ENCODE measurements at regions of chr22 and their contacts with region 1.

Region 1: DNA sequence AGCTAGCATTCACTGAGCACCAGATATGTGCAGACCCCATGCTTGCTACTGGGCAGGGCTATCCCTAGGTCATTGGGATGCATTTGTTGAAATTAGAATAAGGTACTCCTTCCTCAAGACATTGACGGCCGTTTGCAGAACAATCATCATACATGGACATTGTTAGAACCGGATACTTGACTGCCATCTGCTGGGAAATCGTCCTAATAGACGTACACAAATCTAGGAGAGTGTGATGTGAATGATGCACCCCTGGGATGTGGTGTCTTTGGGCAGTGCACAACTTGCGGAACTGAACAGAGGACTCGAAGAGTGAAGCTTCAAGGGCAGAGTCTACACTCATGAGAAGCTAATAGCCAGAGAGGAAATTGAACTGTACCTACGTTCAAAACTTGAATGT is 35.9 kb downstream of the MYO18B start:
- DNase-seq: peak; percentile 78
- H3K4me3 Mint-ChIP-seq: no peak overlapping the region
- H3K27ac Mint-ChIP-seq: no peak overlapping the region
- H3K4me1 Mint-ChIP-seq: peaks cover 7% of the 10 kb centered on the region
- H3K27me3 Mint-ChIP-seq: no peaks in the 10 kb centered on the region

Region 2: DNA sequence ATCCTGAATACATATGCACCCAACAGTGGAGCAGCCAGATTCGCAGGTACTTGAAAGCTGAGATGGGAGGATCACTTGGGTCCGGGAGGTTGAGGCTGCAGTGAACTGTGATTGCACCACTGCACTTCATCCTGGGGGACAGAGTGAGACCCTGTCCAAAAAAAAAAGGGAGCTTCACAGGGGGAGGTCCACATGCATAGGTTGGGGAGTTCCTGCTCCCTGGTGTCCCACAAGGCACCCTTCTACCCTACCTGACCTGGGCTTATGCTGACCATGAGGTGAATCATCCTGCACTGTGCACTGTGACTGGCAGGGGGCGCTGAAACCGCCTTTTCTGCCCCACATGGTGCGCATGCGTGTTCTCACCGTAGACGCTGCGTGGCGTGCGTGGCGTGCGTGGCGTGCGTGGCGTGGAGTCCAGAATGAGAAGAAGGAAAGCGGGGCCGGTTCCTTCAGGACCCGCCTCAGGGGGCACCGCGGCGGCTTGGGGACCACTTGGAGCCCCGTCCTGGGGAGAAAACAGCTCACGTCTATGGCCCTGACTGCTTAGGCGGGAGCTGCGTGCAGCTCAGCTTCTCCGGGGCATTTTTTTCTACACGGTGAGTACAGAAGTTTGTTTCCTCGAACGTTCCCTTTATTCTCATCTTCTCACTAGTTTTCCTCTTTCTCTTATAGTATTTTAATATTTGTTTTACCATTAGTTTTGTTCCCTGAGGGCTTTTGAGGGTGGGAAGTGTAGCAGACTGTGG is 330.0 kb before region 1 on chr22:
- intact Hi-C with region 1: loop called (anchors 5 kb)
- DNase-seq: peak; percentile 97
- H3K4me3 Mint-ChIP-seq: peak overlapping the region; percentile 90
- H3K27ac Mint-ChIP-seq: peak overlapping the region; percentile 95
- H3K4me1 Mint-ChIP-seq: peaks cover 39% of the 10 kb centered on the region
- H3K27me3 Mint-ChIP-seq: no peaks in the 10 kb centered on the region

Region 3: DNA sequence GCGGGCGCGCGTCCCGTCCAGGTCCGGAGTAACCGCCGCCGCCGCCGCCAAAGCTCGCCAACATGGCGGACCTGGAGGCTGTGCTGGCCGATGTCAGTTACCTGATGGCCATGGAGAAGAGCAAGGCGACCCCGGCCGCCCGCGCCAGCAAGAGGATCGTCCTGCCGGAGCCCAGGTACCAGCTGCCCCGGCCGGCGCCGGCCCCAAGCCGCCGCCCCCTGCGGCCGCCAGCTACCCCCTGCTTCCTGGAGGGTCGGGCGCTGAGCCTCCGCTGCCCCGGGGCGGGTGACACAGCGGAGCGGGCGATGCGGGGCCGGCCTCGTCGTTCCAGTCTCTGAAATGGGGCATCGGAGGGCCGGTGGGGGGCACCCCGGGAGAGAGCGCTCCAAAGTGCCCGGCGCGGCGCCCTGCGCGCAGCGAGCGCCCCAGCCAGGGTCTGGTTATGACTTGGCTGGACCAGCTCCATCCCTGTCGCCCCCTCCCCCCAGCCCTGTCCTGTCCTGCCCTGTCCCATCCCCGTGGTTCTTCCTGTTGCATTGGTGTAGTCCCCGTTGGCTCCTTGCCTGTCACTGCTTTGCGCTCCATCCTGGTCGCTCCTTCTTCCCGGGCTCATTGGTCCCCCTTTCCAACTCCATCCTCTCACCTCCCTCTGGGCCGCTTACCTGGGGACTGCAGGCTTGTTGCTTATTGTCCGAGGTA is 212.7 kb before region 1 on chr22:
- intact Hi-C with region 1: loop called (anchors 5 kb)
- DNase-seq: peak; percentile 79
- H3K4me3 Mint-ChIP-seq: peak overlapping the region; percentile 96
- H3K27ac Mint-ChIP-seq: peak overlapping the region; percentile 95
- H3K4me1 Mint-ChIP-seq: peaks cover 64% of the 10 kb centered on the region
- H3K27me3 Mint-ChIP-seq: no peaks in the 10 kb centered on the region

Region 4: DNA sequence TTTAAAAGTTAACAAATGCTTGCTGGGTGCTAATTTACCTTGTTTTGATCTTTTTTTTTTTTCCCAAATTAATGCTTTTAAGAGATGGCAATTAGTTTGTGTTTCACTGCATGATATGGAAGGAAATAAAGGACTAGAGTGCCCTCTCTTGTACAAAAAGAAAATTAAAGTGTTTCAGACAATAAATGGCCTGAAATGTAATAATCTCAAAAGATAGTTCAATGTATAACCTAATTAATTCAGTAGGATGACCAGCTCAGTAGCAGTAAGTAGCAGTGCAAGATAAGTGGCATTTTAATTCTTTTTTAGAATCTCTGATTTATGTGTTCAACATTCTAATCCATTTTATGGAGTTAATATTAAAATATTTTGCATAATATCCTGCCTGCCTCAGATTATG is 75.8 kb before region 1 on chr22:
- intact Hi-C with region 1: loop called (anchors 1 kb)
- DNase-seq: no peak
- H3K4me3 Mint-ChIP-seq: peak overlapping the region; percentile 69
- H3K27ac Mint-ChIP-seq: peak overlapping the region; percentile 61
- H3K4me1 Mint-ChIP-seq: peaks cover 47% of the 10 kb centered on the region
- H3K27me3 Mint-ChIP-seq: no peaks in the 10 kb centered on the region

Region 5: GRCh38 chr22:25718135-25718840 is 59.6 kb before region 1 on chr22:
- intact Hi-C with region 1: loop called (anchors 5 kb)
- DNase-seq: no peak
- H3K4me3 Mint-ChIP-seq: no peak overlapping the region
- H3K27ac Mint-ChIP-seq: peak overlapping the region; percentile 32
- H3K4me1 Mint-ChIP-seq: peaks cover 9% of the 10 kb centered on the region
- H3K27me3 Mint-ChIP-seq: no peaks in the 10 kb centered on the region

Region 6: GRCh38 chr22:25736378-25737011 is 41.4 kb before region 1 on chr22:
- intact Hi-C with region 1: loop called (anchors 5 kb)
- DNase-seq: peak; percentile 92
- H3K4me3 Mint-ChIP-seq: peak overlapping the region; percentile 71
- H3K27ac Mint-ChIP-seq: peak overlapping the region; percentile 98
- H3K4me1 Mint-ChIP-seq: peaks cover 48% of the 10 kb centered on the region
- H3K27me3 Mint-ChIP-seq: no peaks in the 10 kb centered on the region

Region 7: GRCh38 chr22:26330966-26331625 is 553.2 kb after region 1 on chr22:
- intact Hi-C with region 1: loop called (anchors 5 kb)
- DNase-seq: peak; percentile 88
- H3K4me3 Mint-ChIP-seq: no peak overlapping the region
- H3K27ac Mint-ChIP-seq: no peak overlapping the region
- H3K4me1 Mint-ChIP-seq: no peaks in the 10 kb centered on the region
- H3K27me3 Mint-ChIP-seq: peaks cover 10% of the 10 kb centered on the region

Measured in activated CD4-positive, alpha-beta T cell treated with anti-CD3 and anti-CD28 coated beads, Interleukin-2, amount 10 ng/mL, durations not matched to agents 24 days and 14 days (primary cell).